WTC11 (cell line): ENCODE measurements at regions of chr1 and their contacts with region 1.

Region 1: GRCh38 chr1:52348704-52349300 is 17.2 kb downstream of the CC2D1B start:
- DNase-seq: peak; percentile 67
- ATAC-seq: peak; percentile 86
- H3K4me3 Mint-ChIP-seq: no peak overlapping the region
- H3K27ac Mint-ChIP-seq: peak overlapping the region; percentile 80; the same call in 1 of the 2 replicates
- H3K4me1 Mint-ChIP-seq: peaks cover 16% of the 10 kb centered on the region
- H3K27me3 Mint-ChIP-seq: no peaks in the 10 kb centered on the region
- CTCF ChIP-seq: no peak

Region 2: DNA sequence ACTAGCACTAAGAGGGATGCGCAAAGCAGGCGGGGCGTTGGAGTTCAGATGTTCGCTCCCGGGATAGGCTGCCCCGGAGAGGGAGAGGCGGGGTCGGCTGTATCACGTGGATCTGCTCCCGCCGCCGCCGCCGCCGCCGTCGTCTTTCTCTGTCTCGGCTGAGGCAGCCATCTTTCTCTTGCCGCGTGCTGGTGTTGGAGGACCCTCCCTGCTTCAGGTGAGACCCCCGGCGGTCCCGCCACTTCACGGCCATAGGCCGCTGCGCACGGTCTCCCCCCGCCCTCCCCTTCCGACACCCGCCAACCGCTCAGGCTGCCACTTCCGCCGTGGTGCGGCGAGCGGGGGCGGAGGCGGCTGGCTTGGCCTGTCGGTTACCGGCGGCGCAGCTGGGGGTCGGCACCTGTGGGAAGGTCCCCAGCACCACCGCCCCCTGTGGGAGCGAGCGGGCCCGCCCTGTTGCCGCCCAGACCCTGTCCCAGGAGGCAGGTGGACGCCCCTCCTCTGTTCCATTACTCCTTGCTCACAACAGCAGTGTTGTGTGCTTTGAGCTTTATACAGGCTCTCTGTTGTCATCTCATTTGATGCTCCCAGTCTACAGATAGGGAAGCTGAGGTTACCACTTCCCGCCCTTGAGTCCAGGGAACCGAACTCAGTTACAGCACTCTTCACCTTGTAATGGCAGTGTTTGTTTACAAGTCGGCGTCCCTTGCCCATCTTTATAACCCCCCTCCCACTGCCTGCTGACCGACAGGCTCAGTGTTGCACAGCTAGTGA is 292.5 kb before region 1 on chr1 and contains the start of gene BTF3L4:
- CTCF ChIA-PET with region 1: interaction called, 12 read pairs
- POLR2A ChIA-PET with region 1: interaction called, 5 read pairs
- DNase-seq: peak; percentile 98
- ATAC-seq: peak; percentile 90
- H3K4me3 Mint-ChIP-seq: peak within 1 kb of the TSS; percentile 97
- H3K27ac Mint-ChIP-seq: peak within 1 kb of the TSS; percentile 99
- H3K4me1 Mint-ChIP-seq: peaks cover 33% of the 10 kb centered on the region
- H3K27me3 Mint-ChIP-seq: no peaks in the 10 kb centered on the region
- CTCF ChIP-seq: no peak
- total RNA-seq, gene BTF3L4: 74.7 to 89.4 TPM (median 79.0 TPM) in 3 replicates

Region 3: DNA sequence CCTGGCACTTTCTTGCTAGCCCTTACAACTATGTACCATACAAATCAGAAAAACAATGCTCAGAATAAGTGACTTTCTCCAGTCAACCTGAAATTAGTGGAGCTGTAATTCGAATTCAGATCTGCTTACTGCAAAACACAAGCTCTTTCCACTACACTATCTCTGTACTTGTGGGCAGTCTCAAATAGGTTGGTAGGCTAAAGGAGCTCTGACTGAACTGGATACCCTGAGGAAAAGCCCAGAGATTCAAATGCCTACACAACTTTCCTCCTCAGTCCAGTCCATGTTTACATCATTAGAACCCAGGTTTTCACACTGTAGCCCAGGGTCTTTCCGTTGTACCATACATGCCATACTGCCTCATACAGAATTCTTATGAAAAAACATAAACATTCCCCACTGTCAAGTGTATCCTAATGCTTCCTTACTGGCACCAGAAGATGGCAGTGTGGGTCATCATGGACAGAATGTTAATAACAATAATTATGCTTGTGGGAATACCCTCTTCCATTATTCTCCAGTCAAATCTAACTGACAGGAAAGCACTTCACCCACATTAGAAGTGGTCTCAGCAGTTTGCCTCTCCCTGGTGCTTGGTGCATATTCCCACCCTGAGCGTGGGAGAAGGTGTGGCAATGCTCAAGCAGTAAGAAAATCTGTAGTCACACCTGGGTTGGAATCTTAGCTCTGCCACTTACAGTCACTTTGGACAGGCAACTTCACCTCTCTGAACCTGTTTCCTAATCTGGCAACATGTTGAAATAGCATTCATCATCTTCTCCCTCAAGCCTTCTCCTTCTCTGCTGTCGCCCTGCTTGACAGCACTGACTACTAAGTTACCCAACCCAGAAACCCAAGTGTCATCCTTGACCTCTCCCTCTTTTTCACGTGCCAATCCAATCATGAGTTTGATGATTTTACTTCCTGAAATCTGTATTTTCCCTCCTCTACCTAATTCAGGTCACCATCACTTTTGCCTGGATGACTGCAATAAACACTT is 221.3 kb before region 1 on chr1:
- CTCF ChIA-PET with region 1: interaction called, 34 read pairs
- POLR2A ChIA-PET with region 1: no interaction called
- DNase-seq: no peak
- ATAC-seq: peak; percentile 68
- H3K4me3 Mint-ChIP-seq: no peak overlapping the region
- H3K27ac Mint-ChIP-seq: no peak overlapping the region
- H3K4me1 Mint-ChIP-seq: no peaks in the 10 kb centered on the region
- H3K27me3 Mint-ChIP-seq: peaks cover 7% of the 10 kb centered on the region; the same call in 1 of the 2 replicates
- CTCF ChIP-seq: peak; percentile 23; the same call in 1 of the 2 replicates

Region 4: DNA sequence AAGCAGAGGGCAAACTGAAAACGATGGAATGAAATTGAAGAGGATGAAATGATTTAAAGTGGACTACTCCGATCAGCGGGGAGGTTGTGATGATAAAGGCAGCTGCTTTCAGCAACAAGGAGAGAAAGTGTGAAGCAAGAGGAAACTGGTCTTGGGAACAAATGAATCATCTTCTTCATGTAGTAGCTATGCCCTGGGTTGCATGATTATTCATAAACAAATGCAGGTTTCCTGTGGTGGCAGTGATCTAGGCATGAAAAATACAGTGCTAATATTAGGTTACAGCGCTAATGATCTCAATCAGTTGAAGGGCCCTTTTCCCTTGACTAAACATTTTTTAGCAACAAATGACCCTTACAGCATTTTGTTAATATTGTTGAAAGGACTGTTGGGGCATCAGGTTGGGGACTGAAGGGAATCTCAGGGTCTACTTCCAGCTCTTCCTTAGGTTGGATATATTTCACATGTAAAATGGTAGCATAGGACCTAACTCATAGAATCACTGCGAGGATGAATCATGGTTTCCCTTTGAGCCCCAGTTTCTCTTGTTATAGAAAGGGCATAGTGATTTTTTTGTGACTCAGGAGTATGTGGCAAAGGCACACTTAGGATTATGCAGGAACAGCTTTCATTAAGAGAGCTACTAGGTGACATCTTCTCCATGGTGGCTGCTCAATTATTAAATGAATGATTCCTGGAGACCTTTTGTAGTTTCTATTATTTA is 208.8 kb before region 1 on chr1:
- CTCF ChIA-PET with region 1: interaction called, 7 read pairs
- POLR2A ChIA-PET with region 1: interaction called, 10 read pairs
- DNase-seq: no peak
- ATAC-seq: no peak
- H3K4me3 Mint-ChIP-seq: no peak overlapping the region
- H3K27ac Mint-ChIP-seq: no peak overlapping the region
- H3K4me1 Mint-ChIP-seq: peaks cover 12% of the 10 kb centered on the region
- H3K27me3 Mint-ChIP-seq: peaks cover 18% of the 10 kb centered on the region
- CTCF ChIP-seq: no peak

Region 5: DNA sequence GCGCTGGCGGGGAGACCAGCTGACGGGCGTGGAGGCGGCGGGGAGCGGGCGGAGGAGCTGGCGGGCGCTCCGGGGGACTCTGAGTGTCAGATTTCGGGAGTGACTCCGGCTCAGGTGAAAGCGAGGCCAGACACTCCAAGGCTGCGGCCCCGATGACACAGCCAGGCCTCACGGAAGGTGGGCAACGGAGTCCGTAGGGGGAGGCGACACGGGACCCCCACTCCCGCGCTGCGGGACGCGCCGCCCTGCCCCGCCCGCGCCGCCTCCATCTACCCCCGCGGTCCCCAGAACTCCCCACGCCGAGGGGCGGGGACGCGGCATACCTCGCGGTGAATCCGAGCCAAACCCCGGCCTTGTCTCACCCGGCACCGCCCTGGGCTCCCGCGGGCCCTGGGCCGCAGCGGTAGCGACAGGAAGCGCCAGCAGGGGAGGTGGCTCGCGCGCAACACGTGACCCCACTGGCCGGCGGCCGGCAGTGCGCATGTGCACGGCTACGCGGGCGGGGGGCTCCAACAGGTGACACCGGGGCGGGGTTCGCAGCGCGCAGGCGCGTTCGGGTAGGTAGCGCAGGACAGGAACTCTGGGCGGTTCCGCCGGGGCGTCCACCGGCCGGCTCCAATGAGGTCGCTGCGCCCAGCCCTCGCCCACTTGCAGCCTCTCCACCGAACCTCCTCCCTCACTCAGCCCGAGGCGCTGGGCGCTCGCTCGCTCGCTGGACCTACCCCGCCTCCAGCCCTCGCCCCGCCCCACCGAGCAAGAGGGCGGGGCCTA is 17.1 kb after region 1 on chr1 and contains the start of gene CC2D1B:
- CTCF ChIA-PET with region 1: interaction called, 10 read pairs
- POLR2A ChIA-PET with region 1: interaction called, 7 read pairs
- DNase-seq: peak; percentile 99
- ATAC-seq: peak; percentile 96
- H3K4me3 Mint-ChIP-seq: peak within 1 kb of the TSS; percentile 91
- H3K27ac Mint-ChIP-seq: peak within 1 kb of the TSS; percentile 91
- H3K4me1 Mint-ChIP-seq: peaks cover 25% of the 10 kb centered on the region
- H3K27me3 Mint-ChIP-seq: no peaks in the 10 kb centered on the region; the same call in 1 of the 2 replicates
- CTCF ChIP-seq: no peak
- total RNA-seq, gene CC2D1B: 12.8 to 22.6 TPM (median 14.9 TPM) in 3 replicates

Region 6: GRCh38 chr1:52552505-52553361 is 203.9 kb after region 1 on chr1 and contains the start of gene TUT4:
- CTCF ChIA-PET with region 1: no interaction called
- POLR2A ChIA-PET with region 1: interaction called, 12 read pairs
- DNase-seq: peak; percentile 89
- ATAC-seq: peak; percentile 82
- H3K4me3 Mint-ChIP-seq: peak within 1 kb of the TSS; percentile 86
- H3K27ac Mint-ChIP-seq: peak within 1 kb of the TSS; percentile 81
- H3K4me1 Mint-ChIP-seq: peaks cover 36% of the 10 kb centered on the region
- H3K27me3 Mint-ChIP-seq: no peaks in the 10 kb centered on the region
- CTCF ChIP-seq: no peak
- total RNA-seq, gene TUT4: 57.4 to 63.6 TPM (median 63.3 TPM) in 3 replicates